Activated naive CD4-positive, alpha-beta T cell treated with anti-CD3 and anti-CD28 coated beads for 36 hours (primary cell): ENCODE measurements at regions of chr5 and their contacts with region 1.

Region 1: GRCh38 chr5:139417214-139417613 is 13.3 kb upstream of the SPATA24 start:
- DNase-seq: no peak
- H3K4me3 Mint-ChIP-seq: no peak overlapping the region
- H3K27ac Mint-ChIP-seq: no peak overlapping the region
- H3K4me1 Mint-ChIP-seq: peaks cover 50% of the 10 kb centered on the region
- H3K27me3 Mint-ChIP-seq: no peaks in the 10 kb centered on the region

Region 2: DNA sequence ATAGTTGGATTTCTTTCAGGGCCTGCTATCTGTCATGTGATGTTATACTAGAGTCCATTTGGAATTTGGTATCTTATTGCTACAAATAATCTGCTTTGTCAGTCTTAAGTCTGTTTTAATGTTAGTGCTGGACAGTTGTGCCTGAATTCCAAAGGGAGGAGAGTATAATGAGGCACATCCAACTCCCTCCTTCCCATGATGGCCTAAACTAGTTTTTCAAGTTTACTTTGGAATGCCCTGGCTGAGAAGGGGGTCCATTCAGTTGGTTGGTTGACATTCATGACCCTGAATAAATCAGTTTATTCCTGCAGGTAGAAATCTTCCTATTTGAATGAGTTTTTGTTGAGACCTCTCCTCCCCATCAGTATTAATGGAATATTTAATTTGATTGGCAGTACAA is 532.7 kb before region 1 on chr5:
- CTCF ChIA-PET with region 1: no interaction called
- intact Hi-C with region 1: no loop called
- DNase-seq: no peak
- H3K4me3 Mint-ChIP-seq: no peak overlapping the region
- H3K27ac Mint-ChIP-seq: no peak overlapping the region
- H3K4me1 Mint-ChIP-seq: no peaks in the 10 kb centered on the region
- H3K27me3 Mint-ChIP-seq: peaks cover 20% of the 10 kb centered on the region

Region 3: DNA sequence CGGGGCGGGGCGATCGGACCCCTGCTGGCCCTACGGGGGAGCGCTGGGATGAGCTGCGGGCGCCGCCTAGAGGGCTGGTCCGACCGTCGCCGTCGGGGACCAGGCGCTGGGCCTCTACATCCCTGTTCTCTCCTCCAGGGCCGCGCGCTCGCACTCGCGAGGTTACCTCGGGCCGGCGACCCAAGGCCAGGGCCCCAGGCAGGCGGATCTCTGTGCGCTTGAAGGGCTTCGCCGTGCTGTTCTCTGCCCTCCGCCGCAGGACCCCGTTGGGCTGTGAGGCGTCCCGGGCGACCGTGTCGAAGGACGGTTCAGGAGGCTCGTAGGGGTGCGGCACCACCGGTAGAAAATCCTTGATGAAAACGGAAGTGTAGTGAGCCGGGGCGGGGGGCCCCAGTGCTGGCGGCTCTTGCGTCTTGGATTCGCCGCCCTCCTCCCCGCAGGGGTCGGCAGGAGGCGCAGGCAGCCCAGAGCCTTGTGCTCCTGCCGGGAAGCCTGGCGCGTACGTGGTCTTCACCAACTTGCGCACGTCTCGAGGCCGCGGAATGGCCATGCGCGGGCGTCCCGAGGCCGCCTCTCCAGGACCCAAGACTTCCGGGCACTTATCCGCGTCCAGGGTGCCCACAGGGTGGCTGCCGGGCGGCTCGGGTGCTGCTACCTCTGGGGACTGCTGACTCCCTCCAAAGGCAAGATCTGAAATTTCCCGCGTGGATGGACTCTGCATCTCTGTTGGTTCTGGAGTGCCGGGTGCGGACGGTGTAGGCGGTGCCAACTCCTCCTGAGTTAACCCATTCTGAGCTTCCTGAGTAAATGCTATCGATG is 24.3 kb before region 1 on chr5:
- CTCF ChIA-PET with region 1: interaction called, 4 read pairs
- intact Hi-C with region 1: loop called (anchors 1 kb)
- DNase-seq: peak; percentile 86
- H3K4me3 Mint-ChIP-seq: peak overlapping the region; percentile 89
- H3K27ac Mint-ChIP-seq: peak overlapping the region; percentile 78
- H3K4me1 Mint-ChIP-seq: peaks cover 39% of the 10 kb centered on the region
- H3K27me3 Mint-ChIP-seq: no peaks in the 10 kb centered on the region

Region 4: DNA sequence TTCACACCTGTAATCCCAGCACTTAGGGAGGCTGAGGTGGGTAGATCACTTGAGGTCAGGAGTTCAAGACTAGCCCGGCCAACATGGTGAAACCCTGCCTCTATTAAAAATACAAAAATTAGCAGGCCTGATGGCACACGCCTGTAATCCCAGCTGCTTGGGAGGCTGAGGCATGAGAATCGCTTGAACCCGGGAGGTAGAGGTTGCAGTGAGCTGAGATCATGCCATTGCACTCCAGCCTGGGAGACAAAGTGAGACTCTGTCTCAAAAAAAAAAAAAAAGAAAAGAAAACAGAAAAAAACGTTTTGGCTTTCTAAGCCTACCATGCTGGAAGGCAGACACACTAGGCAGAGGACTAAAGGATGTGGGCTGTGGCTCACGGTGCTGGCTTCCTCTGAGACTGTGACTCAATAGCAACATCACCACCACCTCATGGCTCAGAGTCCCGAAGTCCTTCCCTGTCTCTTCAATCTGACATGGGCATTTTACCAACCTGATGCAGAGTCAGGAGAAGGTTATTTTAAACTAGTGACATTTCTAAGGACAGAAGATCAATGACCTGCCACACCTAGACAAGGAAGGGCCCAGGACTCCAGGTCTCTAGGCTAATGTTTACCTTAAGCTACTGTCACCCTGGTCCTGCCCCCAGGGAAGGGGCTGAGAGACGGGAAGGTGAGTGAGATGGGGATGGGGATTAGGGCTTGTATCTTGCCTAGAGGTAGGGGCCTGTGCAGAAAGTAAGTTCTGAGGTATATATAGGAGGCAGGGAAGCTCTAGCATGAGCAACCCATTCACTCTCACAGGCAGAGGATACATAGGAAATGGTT is 41.6 kb after region 1 on chr5:
- CTCF ChIA-PET with region 1: interaction called, 9 read pairs
- intact Hi-C with region 1: loop called (anchors 1 kb)
- DNase-seq: peak; percentile 93
- H3K4me3 Mint-ChIP-seq: peak overlapping the region; percentile 50
- H3K27ac Mint-ChIP-seq: peak overlapping the region; percentile 94
- H3K4me1 Mint-ChIP-seq: peaks cover 54% of the 10 kb centered on the region
- H3K27me3 Mint-ChIP-seq: no peaks in the 10 kb centered on the region

Region 5: GRCh38 chr5:139482050-139482889 is 65.1 kb after region 1 on chr5 and contains the start of gene STING1:
- CTCF ChIA-PET with region 1: interaction called, 20 read pairs
- intact Hi-C with region 1: loop called (anchors 1 kb)
- DNase-seq: peak; percentile 90
- H3K4me3 Mint-ChIP-seq: peak within 1 kb of the TSS; percentile 100
- H3K27ac Mint-ChIP-seq: peak within 1 kb of the TSS; percentile 100
- H3K4me1 Mint-ChIP-seq: peaks cover 46% of the 10 kb centered on the region
- H3K27me3 Mint-ChIP-seq: no peaks in the 10 kb centered on the region
- total RNA-seq, gene STING1: 136 to 140 TPM